Cardiac septum (tissue), 1 donor: ENCODE measurements at regions of chr6 and their contacts with region 1.

Region 1: DNA sequence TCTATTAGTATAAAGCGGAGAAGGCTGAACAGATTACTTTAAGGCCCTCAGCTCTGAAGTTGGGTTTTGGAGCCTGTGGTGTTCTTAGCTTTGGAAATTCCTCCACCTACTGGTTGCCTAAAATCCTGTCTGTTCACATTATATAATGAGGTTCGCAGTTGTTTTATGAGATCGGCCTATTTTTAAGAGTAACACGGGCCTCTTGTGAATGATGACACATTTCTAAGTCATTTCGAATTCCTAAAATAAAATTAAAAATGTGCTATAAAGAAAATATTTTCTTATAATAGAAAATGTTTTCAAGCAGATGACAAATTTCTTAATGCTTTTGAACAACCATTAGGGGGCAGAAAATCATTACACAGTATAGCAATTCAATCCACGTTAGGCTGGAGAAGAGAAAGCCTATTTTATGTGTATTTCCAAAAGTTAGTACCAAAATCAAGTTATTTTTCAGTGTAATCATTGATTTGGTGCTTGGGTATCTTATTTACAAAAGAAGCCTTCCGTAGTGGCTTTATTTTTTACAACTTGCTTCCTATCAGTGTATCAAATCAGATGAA is 15.8 kb upstream of the FAM8A1 start:
- DNase-seq: no peak

Region 2: DNA sequence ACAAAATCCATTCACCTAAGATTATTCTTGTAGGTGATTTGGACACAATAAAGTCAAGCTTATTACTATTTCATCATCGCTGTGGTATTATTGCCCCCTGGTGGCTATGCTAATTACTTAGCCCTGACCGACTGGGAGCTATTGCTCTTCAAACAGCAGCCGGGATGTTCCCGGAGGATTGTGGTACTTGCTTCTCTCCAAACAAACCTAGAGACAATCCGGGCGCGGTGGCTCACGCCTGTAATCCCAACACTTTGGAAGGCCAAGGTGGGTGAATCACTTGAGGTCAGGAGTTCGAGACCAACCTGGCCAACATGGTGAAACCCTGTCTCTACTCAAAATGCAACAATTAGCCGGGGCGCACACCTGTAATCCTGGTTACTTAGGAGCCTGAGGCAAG is 497.9 kb before region 1 on chr6:
- intact Hi-C with region 1: no loop called
- DNase-seq: no peak

Region 3: DNA sequence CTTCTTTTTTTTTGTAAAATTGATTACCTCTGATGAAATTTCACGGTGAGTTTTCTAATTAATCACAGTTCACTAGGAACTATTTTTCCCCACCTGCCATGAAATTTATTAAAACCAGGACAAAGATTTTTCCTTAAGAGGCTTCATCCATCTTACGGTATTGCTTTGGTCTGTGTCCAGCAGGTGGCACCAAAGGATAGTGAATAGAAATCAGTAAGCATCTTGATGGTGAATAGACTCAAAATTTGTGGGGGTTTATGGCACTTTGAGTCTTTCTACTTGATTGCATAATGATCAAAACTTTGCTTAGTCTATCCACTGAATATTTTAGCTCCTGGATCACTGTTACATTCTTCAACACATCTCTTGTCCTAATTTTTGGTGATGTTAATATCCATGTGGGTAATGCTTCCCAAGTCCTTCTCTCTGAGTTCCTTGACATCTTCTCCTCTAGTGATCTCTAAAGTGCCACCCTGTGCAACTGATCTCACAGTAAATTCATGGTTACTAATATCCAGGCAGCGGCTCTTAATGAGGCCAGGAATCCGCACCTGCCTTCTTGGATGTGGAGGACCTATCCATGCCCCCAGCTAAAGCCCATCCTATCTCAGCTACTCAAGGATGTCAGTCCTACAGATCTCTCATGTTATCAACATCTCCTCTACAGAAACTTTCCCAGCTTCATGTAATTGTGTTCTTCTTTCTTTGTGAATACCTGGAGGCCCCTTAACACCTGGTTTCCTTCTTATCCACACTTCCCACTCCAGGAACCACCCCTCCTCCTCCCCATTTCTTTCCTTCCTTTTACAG is 428.0 kb before region 1 on chr6:
- intact Hi-C with region 1: loop called (anchors 2 kb)
- DNase-seq: no peak

Region 4: GRCh38 chr6:17289630-17290061 is 294.7 kb before region 1 on chr6:
- intact Hi-C with region 1: loop called (anchors 5 kb)
- DNase-seq: no peak

Region 5: DNA sequence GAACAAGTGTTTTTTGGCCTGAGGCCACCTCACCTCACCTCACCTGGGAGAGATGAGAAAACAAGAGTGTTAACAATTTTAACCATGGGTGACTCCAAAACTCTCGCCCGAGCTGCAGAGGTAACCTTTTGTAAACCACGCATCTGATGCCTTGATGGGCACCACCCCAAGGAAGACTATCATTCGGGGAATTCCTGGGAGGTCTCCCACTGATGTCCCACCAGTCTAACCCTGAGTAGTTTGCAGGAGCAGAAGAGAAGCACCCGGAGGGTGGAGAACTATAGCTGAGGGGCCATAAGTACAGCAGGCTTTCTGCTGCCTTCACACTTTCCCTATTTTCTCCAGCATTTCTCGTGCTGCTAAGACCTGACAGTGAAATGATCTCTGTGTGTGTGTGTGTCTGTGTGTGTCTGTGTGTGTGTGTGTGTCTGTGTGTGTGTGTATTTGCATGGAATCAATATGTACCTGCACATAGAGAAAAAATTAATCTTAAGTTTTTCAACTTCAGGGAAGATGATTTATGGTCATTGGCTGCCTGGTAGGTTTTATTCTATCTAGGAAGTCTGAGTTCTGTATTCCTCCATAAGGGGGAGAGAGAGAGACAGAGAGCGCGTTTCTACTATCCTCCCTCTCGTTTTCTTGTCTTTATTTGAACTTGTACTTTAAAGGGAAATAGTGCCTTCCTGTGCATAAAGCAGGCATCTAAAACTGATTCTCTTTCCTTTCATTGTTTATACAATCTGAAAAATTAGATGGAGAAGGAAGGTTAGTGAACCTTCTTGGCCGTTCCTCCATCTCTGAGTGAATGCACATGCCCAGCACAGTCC is 115.1 kb before region 1 on chr6:
- intact Hi-C with region 1: loop called (anchors 5 kb)
- DNase-seq: no peak

Region 6: DNA sequence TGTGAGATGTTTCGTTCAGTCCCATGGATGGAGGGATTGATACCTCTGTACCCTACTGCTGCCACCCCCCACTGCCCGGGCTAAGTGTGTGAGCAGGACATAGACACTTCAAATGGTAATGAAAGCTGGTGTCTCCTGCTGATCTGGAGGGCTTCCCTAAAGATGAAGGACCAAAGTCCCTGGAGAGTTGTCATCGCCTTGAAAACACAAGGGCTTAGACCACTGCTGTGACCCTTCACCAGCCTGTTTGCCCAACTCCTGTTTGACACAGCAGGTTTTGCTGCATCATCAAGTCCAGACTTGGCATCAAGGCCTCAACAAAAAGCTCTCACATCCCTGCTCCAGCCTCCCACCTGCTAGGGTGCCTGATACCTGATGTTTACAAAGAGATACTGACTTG is 42.1 kb before region 1 on chr6:
- intact Hi-C with region 1: no loop called
- DNase-seq: no peak

Region 7: DNA sequence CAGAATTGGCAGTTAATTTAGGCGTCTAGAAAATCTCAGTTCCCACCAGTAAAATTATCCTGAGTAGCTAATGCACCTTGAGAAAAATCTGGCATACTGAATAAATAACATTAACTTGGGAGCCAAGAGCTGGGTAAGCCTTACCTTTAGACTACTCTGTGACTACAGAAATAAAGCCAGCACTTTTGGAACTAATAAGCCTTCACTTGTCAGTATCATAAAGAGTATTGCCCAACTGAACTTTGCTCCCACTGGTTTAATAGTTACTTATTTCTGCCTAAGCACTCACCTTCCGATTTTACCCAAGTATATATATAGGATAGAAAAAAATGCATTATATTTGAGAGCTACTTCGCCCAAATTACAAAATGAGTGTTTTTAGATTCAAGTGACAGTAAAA is 26.5 kb after region 1 on chr6:
- intact Hi-C with region 1: no loop called
- DNase-seq: no peak

Region 8: GRCh38 chr6:17628873-17629272 is 44.6 kb after region 1 on chr6:
- intact Hi-C with region 1: no loop called
- DNase-seq: no peak

Region 9: GRCh38 chr6:17808609-17809008 is 224.3 kb after region 1 on chr6:
- intact Hi-C with region 1: loop called (anchors 5 kb)
- DNase-seq: no peak